ENCODE measurements at regions of chr4 and their contacts with region 1.

Region 1: GRCh38 chr4:157992038-157992705 is 180.7 kb downstream of the GASK1B start:
- DNase-seq: peak; percentile 24 to 65 (median 42)
- ATAC-seq: peak; percentile 83
- H3K4me3 ChIP-seq: no peak overlapping the region
- H3K27ac ChIP-seq: peak overlapping the region in 3 of 4 donors; percentile 43 to 76 (median 53)
- H3K4me1 ChIP-seq: peaks cover 33% of the 10 kb centered on the region
- H3K27me3 ChIP-seq: no peaks in the 10 kb centered on the region
- CTCF ChIP-seq: peak in 6 of 7 experiments; percentile 50 to 85 (median 81)
- POLR2A ChIP-seq: no peak

Region 2: GRCh38 chr4:158169931-158170690 is 177.9 kb after region 1 on chr4:
- intact Hi-C with region 1: loop called (anchors 5 kb)
- DNase-seq: peak in 1 of 4 donors; percentile 17
- ATAC-seq: no peak
- H3K4me3 ChIP-seq: peak overlapping the region in 1 of 2 donors; percentile 29
- H3K27ac ChIP-seq: peak overlapping the region in 3 of 4 donors; percentile 53 to 74 (median 57)
- H3K4me1 ChIP-seq: peaks cover 47% of the 10 kb centered on the region
- H3K27me3 ChIP-seq: no peaks in the 10 kb centered on the region
- CTCF ChIP-seq: no peak
- POLR2A ChIP-seq: peak in 1 of 3 donors; percentile 42

Measured in body of pancreas (tissue), 4 donors.